ENCODE measurements at regions of chr1 and their contacts with region 1.

Region 1: DNA sequence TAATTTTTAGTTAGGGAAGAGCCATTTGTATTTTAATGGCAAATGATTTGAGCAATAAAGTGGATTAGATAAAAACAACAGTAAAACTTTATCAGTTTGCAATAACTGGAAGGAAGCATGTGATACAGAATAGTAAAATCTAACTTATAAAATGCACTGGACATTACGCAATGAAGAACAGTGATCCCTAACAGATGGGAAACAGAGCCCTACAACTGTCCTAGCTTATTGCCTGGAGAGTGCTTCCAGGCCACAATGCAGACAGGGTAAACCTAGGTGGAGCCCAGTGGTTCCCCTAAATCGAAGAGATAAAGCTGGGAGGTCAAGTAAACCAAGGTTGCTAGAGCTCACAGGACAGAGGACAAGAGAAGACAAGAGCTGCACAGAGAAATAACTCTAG is 7.0 kb downstream of the OMA1 start:
- DNase-seq: no peak
- H3K4me3 ChIP-seq: no peak overlapping the region
- H3K27ac ChIP-seq: no peak overlapping the region
- H3K4me1 ChIP-seq: no peaks in the 10 kb centered on the region
- H3K27me3 ChIP-seq: no peaks in the 10 kb centered on the region
- CTCF ChIP-seq: no peak
- POLR2A ChIP-seq: no peak

Region 2: GRCh38 chr1:58477390-58477789 is 62.2 kb before region 1 on chr1:
- intact Hi-C with region 1: no loop called
- DNase-seq: no peak
- H3K4me3 ChIP-seq: no peak overlapping the region
- H3K27ac ChIP-seq: no peak overlapping the region
- H3K4me1 ChIP-seq: no peaks in the 10 kb centered on the region
- H3K27me3 ChIP-seq: no peaks in the 10 kb centered on the region
- CTCF ChIP-seq: no peak
- POLR2A ChIP-seq: no peak

Region 3: GRCh38 chr1:58773406-58773840 is 233.9 kb after region 1 on chr1:
- intact Hi-C with region 1: loop called (anchors 5 kb)
- DNase-seq: peak; percentile 45 to 61
- H3K4me3 ChIP-seq: no peak overlapping the region
- H3K27ac ChIP-seq: peak overlapping the region; percentile 53 to 70
- H3K4me1 ChIP-seq: no peaks in the 10 kb centered on the region
- H3K27me3 ChIP-seq: no peaks in the 10 kb centered on the region
- CTCF ChIP-seq: no peak
- POLR2A ChIP-seq: no peak